Tibial artery (tissue), 4 donors: ENCODE measurements at regions of chr1 and their contacts with region 1.

Region 1: DNA sequence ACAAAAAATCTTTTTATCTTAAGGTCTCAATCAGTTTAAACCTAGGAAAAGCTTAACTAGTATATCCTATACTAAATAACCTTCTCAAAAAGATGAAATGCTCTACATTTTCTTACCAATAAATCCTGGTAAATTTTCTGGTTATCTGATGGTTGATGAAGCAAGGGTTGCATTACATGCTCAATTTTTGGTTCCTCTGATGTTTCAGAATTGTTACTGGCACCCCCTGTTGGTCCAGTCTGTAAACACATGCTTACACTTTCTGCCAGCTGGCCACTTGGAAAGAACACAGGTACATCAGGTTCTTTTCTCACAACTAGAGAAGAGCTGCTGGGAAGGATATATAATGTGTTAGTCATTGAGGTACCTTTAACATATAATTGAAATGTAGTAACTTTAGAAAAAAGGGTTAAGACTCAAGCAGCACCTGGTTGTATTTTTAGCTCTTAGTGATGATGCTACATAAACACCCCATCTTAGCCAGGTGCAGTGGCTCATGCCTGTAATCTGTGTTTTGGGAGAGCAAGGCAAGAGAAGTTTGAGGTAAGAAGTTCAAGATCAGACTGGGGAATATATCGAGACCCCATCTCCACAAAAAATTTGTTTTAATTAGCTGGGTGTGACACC is 30.9 kb upstream of the TAL1 start:
- DNase-seq: no peak
- H3K4me3 ChIP-seq: no peak overlapping the region
- H3K27ac ChIP-seq: no peak overlapping the region
- H3K4me1 ChIP-seq: no peaks in the 10 kb centered on the region
- H3K27me3 ChIP-seq: no peaks in the 10 kb centered on the region
- CTCF ChIP-seq: peak; percentile 42 to 56

Region 2: GRCh38 chr1:47179017-47179987 is 83.6 kb before region 1 on chr1:
- intact Hi-C with region 1: loop called (anchors 2 kb)
- DNase-seq: peak; percentile 90 to 93
- H3K4me3 ChIP-seq: peak overlapping the region; percentile 32 to 44
- H3K27ac ChIP-seq: peak overlapping the region; percentile 8 to 45
- H3K4me1 ChIP-seq: peaks cover 0 to 22% (median 13%) of the 10 kb centered on the region in 4 donors
- H3K27me3 ChIP-seq: peaks cover 0 to 28% of the 10 kb centered on the region in 2 donors
- CTCF ChIP-seq: peak; percentile 90 to 91

Region 3: GRCh38 chr1:47502746-47503370 is 240.0 kb after region 1 on chr1:
- intact Hi-C with region 1: no loop called
- DNase-seq: no peak
- H3K4me3 ChIP-seq: no peak overlapping the region
- H3K27ac ChIP-seq: no peak overlapping the region
- H3K4me1 ChIP-seq: peaks cover 0 to 5% (median 2%) of the 10 kb centered on the region in 4 donors
- H3K27me3 ChIP-seq: peaks cover 0 to 4% of the 10 kb centered on the region in 2 donors
- CTCF ChIP-seq: no peak